PC-3 (cell line): ENCODE measurements at regions of chr1 and their contacts with region 1.

Region 1: GRCh38 chr1:157090196-157090647 is 9.4 kb downstream of the ETV3L start:
- DNase-seq: peak; percentile 94
- ATAC-seq: peak; percentile 98
- H3K4me3 ChIP-seq: no peak overlapping the region
- H3K27ac ChIP-seq: no peak overlapping the region
- H3K4me1 ChIP-seq: 0 out of 2 replicates have a peak, but pooled peaks cover 3% of the 10 kb centered on the region
- H3K27me3 ChIP-seq: no peaks in the 10 kb centered on the region
- CTCF ChIP-seq: peak; percentile 99

Region 2: GRCh38 chr1:157138220-157139051 is 48.2 kb after region 1 on chr1 and contains the start of gene ETV3:
- CTCF ChIA-PET with region 1: interaction called, 18 read pairs
- POLR2A ChIA-PET with region 1: no interaction called
- intact Hi-C with region 1: no loop called
- DNase-seq: peak; percentile 94
- ATAC-seq: peak; percentile 93
- H3K4me3 ChIP-seq: peak within 1 kb of the TSS; percentile 93
- H3K27ac ChIP-seq: peak within 1 kb of the TSS; percentile 48
- H3K4me1 ChIP-seq: peaks cover 17% of the 10 kb centered on the region
- H3K27me3 ChIP-seq: no peaks in the 10 kb centered on the region
- CTCF ChIP-seq: no peak
- total RNA-seq, gene ETV3: 10.1 and 12.2 TPM in 2 replicates

Region 3: GRCh38 chr1:157156058-157156541 is 65.9 kb after region 1 on chr1:
- CTCF ChIA-PET with region 1: interaction called, 72 read pairs
- POLR2A ChIA-PET with region 1: no interaction called
- intact Hi-C with region 1: loop called (anchors 1 kb)
- DNase-seq: peak; percentile 72
- ATAC-seq: peak; percentile 76
- H3K4me3 ChIP-seq: peak overlapping the region; percentile 60
- H3K27ac ChIP-seq: no peak overlapping the region
- H3K4me1 ChIP-seq: peaks cover 11% of the 10 kb centered on the region
- H3K27me3 ChIP-seq: peaks cover 43% of the 10 kb centered on the region
- CTCF ChIP-seq: peak; percentile 98

Region 4: DNA sequence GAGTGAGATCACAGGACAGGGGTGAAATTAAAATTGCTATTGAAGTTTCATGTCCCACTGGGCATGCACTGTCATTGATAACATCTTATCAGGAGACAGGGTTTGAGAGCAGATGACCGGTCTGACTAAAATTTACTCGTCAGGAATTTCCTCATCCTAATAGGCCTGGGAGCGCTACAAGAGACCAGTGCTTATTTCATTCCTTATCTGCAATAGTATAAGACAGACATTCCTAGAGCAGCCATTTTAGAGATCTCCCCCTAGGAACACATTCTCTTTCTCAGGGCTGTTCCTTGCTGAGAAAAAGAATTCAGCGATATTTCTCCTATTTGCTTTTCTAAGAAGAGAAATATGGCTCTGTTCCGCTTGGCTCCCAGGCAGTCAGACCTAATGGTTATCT is 229.3 kb after region 1 on chr1:
- CTCF ChIA-PET with region 1: no interaction called
- POLR2A ChIA-PET with region 1: no interaction called
- intact Hi-C with region 1: no loop called
- DNase-seq: no peak
- ATAC-seq: no peak
- H3K4me3 ChIP-seq: no peak overlapping the region
- H3K27ac ChIP-seq: no peak overlapping the region
- H3K4me1 ChIP-seq: no peaks in the 10 kb centered on the region
- H3K27me3 ChIP-seq: peaks cover 11% of the 10 kb centered on the region; the same call in 1 of the 2 replicates
- CTCF ChIP-seq: no peak

Region 5: DNA sequence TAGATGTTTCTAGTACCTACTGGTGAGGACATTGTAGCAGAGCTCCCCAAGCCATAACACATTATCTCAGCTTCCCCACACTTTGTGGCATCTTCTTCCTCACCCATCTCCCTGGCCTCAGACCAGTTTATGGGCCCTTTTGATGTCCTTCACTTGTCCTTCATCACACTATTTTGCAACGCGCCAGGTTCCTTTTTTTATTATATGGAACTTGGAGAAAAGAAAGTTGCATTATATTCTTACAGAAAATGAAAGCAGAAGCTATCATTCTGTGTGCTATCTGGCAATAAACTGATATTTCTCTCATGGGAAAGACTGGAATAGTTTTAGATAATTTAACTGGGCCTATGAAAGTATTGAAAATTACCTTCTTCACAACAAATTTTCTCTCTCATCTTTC is 244.8 kb after region 1 on chr1:
- CTCF ChIA-PET with region 1: no interaction called
- POLR2A ChIA-PET with region 1: no interaction called
- intact Hi-C with region 1: no loop called
- DNase-seq: no peak
- ATAC-seq: no peak
- H3K4me3 ChIP-seq: no peak overlapping the region
- H3K27ac ChIP-seq: no peak overlapping the region
- H3K4me1 ChIP-seq: no peaks in the 10 kb centered on the region
- H3K27me3 ChIP-seq: peaks cover 30% of the 10 kb centered on the region
- CTCF ChIP-seq: no peak